ENCODE measurements at regions of chr5 and their contacts with region 1.

Region 1: DNA sequence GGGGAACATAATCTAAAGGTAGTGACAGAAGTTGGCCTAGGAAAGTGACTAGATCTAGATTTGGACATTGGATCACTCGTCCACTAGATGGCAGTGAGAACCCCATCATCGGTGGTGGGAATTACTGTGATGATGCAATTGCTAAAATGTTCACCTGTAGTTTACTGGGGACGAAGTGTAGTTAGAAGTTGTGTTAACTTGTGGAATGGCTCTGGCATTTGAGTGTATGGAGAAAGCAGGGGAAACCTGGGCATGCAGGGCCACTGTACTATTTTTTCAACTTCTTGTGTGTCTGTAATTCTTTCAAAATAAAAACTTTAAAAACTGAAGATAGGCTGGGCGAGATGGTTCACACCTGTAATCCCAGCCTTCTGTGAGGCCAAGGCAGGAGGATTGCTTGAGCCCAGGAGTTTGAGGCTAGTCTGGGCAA is 75.5 kb downstream of the PHAX start:
- DNase-seq: peak; percentile 30 to 85 (median 58)
- ATAC-seq: peak; percentile 73 to 94 (median 84)
- H3K4me3 ChIP-seq: no peak overlapping the region
- H3K4me3 Mint-ChIP-seq: no peak overlapping the region
- H3K27ac ChIP-seq: no peak overlapping the region
- H3K27ac Mint-ChIP-seq: no peak overlapping the region
- H3K4me1 ChIP-seq: peaks cover 0 to 3% of the 10 kb centered on the region in 2 experiments
- H3K4me1 Mint-ChIP-seq: peaks cover 3 to 6% (median 3%) of the 10 kb centered on the region in 3 donors
- H3K27me3 ChIP-seq: no peaks in the 10 kb centered on the region
- H3K27me3 Mint-ChIP-seq: no peaks in the 10 kb centered on the region

Region 2: DNA sequence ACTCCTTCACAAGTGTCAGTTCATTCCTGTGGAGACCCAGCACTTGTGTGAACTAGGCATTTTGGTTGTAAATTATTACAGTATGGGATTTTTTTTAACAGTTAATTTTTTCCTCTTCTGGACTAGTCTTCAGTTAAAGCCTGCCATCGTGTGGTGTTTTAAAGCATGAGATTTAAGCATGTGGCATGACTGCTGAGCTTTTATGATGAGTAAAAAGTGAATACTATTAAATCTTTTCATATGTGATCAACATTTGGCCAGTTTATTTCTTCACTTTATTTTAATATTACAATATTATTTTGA is 125.7 kb after region 1 on chr5:
- CTCF ChIA-PET with region 1: interaction called, 8 to 20 read pairs
- POLR2A ChIA-PET with region 1: no interaction called
- DNase-seq: peak in 5 of 35 experiments; percentile 8 to 57 (median 15)
- ATAC-seq: peak in 1 of 4 experiments; percentile 39
- H3K4me3 ChIP-seq: no peak overlapping the region
- H3K4me3 Mint-ChIP-seq: no peak overlapping the region
- H3K27ac ChIP-seq: no peak overlapping the region
- H3K27ac Mint-ChIP-seq: no peak overlapping the region
- H3K4me1 ChIP-seq: peaks cover 0 to 2% of the 10 kb centered on the region in 2 experiments
- H3K4me1 Mint-ChIP-seq: peaks cover 29 to 40% (median 39%) of the 10 kb centered on the region in 3 donors
- H3K27me3 ChIP-seq: no peaks in the 10 kb centered on the region
- H3K27me3 Mint-ChIP-seq: no peaks in the 10 kb centered on the region

Region 3: DNA sequence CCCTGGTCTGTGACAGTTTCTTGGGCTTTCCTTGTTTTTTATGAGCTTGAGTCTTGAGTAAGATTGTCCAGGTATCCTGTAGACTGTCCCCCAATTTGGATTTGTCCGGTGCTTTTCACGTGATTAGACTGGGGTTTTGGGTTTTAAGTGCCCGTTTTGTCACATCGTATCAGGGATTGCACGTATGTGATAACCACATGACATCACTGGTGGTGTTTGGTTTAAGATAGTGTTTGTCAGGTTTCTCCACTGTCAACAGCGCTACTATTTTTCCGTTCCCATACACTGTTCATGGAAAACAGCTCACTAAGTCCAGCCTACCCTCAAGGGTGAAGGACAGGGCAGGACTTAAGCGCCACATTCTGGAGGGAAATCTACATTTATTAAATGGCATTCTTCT is 140.4 kb after region 1 on chr5:
- CTCF ChIA-PET with region 1: no interaction called
- POLR2A ChIA-PET with region 1: no interaction called
- DNase-seq: peak in 4 of 35 experiments; percentile 12 to 38 (median 22)
- ATAC-seq: no peak
- H3K4me3 ChIP-seq: no peak overlapping the region
- H3K4me3 Mint-ChIP-seq: no peak overlapping the region
- H3K27ac ChIP-seq: no peak overlapping the region
- H3K27ac Mint-ChIP-seq: peak overlapping the region in 1 of 2 donors; percentile 31
- H3K4me1 ChIP-seq: peaks cover 3% of the 10 kb centered on the region in 2 experiments
- H3K4me1 Mint-ChIP-seq: peaks cover 7 to 20% (median 9%) of the 10 kb centered on the region in 3 donors
- H3K27me3 ChIP-seq: no peaks in the 10 kb centered on the region
- H3K27me3 Mint-ChIP-seq: no peaks in the 10 kb centered on the region

Measured in T-cell (primary cell).